ENCODE measurements at regions of chr12 and their contacts with region 1.

Region 1: DNA sequence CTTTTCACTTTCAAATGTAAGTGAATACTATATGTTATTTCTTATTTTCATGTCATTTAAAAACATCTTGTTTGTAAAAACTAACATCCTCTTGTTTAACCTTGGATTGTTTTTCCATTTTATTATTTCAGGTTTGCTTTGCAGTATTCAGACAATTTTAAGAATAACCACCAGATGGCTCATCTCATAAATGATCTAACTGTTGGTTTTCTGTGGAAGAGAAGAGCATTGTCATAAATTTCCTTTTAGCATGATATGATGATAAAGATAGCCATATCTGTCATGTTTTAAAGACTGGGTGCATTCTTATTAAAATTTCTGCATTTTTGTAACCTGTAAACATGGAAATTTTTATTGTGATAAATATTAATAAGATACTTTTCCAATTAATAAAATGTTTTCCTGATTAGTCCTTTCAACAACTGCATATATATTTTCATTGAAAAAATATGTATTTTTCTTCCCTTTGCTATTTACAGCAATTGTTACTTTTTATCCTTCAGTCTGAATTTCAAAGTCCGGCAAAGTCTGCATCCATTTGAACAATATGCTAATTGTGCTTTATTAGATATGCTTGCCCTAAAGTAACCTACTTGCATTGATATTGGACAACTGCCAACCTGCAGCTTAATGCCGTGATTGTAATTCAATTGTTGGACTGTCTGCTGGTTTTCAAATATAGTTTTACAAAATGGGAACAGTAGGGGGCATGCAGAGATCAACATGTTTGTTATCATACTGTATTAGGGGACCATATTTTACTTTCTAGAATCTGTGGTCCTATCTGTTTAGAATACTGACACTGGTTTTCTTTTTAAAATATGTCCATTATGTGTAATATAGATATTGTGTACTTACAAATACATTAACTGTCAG is 163.4 kb downstream of the GARIN6 start:
- DNase-seq: peak; percentile 67
- ATAC-seq: peak; percentile 90
- H3K4me3 ChIP-seq: no peak overlapping the region
- H3K27ac ChIP-seq: no peak overlapping the region
- H3K4me1 ChIP-seq: no peaks in the 10 kb centered on the region
- H3K27me3 ChIP-seq: peaks cover 42% of the 10 kb centered on the region
- CTCF ChIP-seq: peak; percentile 53

Region 2: GRCh38 chr12:99911081-99911480 is 100.1 kb after region 1 on chr12:
- CTCF ChIA-PET with region 1: interaction called, 3 read pairs
- POLR2A ChIA-PET with region 1: no interaction called
- intact Hi-C with region 1: loop called (anchors 2 kb)
- DNase-seq: peak; percentile 91
- ATAC-seq: peak; percentile 64
- H3K4me3 ChIP-seq: no peak overlapping the region; the same call in 1 of the 2 replicates
- H3K27ac ChIP-seq: peak overlapping the region; percentile 11; the same call in 1 of the 2 replicates
- H3K4me1 ChIP-seq: peaks cover 37% of the 10 kb centered on the region
- H3K27me3 ChIP-seq: no peaks in the 10 kb centered on the region
- CTCF ChIP-seq: no peak

Region 3: GRCh38 chr12:99984271-99985128 is 173.5 kb after region 1 on chr12 and contains the start of gene ANKS1B:
- CTCF ChIA-PET with region 1: no interaction called
- POLR2A ChIA-PET with region 1: no interaction called
- intact Hi-C with region 1: loop called (anchors 2 kb)
- DNase-seq: peak; percentile 49
- ATAC-seq: peak; percentile 82
- H3K4me3 ChIP-seq: peak within 1 kb of the TSS; percentile 73
- H3K27ac ChIP-seq: no peak within 1 kb of the TSS
- H3K4me1 ChIP-seq: 0 out of 2 replicates have a peak, but pooled peaks cover 4% of the 10 kb centered on the region
- H3K27me3 ChIP-seq: peaks cover 59% of the 10 kb centered on the region
- CTCF ChIP-seq: no peak
- total RNA-seq, gene ANKS1B: 0.07 and 0.98 TPM in 2 replicates

Region 4: DNA sequence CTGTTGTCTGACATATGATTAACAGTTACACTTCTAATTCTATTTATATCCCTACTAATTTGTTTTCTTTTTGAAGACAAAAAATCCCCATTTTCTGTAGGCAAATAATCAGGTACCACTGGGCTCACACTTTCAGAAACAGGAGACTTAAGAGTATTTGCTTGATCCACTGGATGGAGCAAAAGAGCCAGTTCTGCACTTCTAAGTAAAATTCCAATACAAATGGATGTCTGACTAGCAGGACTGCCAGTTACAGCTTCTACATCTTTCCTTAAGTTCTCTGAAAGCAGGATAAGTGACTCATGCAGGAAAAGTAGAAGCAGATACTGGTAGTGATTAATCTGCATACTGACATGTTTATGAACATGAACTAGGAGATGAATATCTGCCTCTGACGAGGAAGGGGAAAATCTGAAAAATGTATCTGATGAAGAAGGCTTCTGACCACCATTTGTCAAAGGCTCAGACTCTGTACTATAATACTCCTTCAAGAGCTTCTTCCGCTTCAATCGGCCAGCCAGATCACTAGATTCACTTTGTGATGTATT is 247.6 kb after region 1 on chr12:
- CTCF ChIA-PET with region 1: no interaction called
- POLR2A ChIA-PET with region 1: no interaction called
- intact Hi-C with region 1: loop called (anchors 5 kb)
- DNase-seq: peak; percentile 68
- ATAC-seq: peak; percentile 96
- H3K4me3 ChIP-seq: no peak overlapping the region
- H3K27ac ChIP-seq: no peak overlapping the region
- H3K4me1 ChIP-seq: peaks cover 6% of the 10 kb centered on the region; the same call in 1 of the 2 replicates
- H3K27me3 ChIP-seq: no peaks in the 10 kb centered on the region
- CTCF ChIP-seq: peak; percentile 52

Region 5: DNA sequence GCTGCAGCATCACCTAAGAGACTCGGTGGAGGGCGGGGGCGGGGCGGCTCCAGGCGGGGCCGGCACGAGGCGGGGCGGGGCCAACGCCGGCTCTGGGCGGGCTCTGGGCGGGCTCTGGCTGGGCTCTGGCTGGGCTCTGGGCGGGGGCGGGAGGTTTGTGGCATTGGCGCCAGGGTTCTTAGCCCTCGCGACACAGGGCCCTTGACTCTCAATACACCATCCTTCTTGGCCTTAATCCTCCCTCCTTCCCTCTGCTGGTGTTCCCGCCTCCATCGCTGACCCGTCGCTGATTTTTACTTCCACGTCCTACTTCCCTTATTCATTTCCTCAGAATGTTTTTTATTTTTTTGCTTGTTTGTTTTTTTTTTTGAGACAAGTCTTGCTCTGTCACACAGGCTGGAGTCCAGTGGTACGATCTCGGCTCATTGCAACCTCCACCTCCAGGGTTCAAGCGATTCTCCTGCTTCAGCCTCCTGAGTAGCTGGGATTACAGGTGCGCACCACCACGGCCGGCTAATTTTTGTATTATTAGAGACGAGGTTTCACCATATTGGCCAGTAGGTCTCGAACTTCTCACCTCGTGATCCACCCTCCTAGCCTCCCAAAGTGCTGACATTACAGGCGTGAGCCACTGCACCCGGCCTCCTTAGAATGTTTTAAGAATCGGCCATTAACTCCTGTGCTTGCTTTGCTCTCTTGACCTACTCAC is 332.0 kb after region 1 on chr12 and contains the start of gene BLTP3B:
- CTCF ChIA-PET with region 1: no interaction called
- POLR2A ChIA-PET with region 1: no interaction called
- intact Hi-C with region 1: loop called (anchors 2 kb)
- DNase-seq: peak; percentile 76
- ATAC-seq: peak; percentile 78
- H3K4me3 ChIP-seq: peak within 1 kb of the TSS; percentile 98
- H3K27ac ChIP-seq: peak within 1 kb of the TSS; percentile 64
- H3K4me1 ChIP-seq: peaks cover 32% of the 10 kb centered on the region
- H3K27me3 ChIP-seq: no peaks in the 10 kb centered on the region
- CTCF ChIP-seq: no peak
- total RNA-seq, gene BLTP3B: 29.0 and 32.0 TPM in 2 replicates

Region 6: GRCh38 chr12:100229058-100229637 is 418.2 kb after region 1 on chr12:
- CTCF ChIA-PET with region 1: no interaction called
- POLR2A ChIA-PET with region 1: no interaction called
- intact Hi-C with region 1: loop called (anchors 1 kb)
- DNase-seq: peak; percentile 76
- ATAC-seq: peak; percentile 81
- H3K4me3 ChIP-seq: peak overlapping the region; percentile 16; the same call in 1 of the 2 replicates
- H3K27ac ChIP-seq: peak overlapping the region; percentile 72
- H3K4me1 ChIP-seq: peaks cover 34% of the 10 kb centered on the region
- H3K27me3 ChIP-seq: no peaks in the 10 kb centered on the region
- CTCF ChIP-seq: peak; percentile 79